ENCODE measurements at regions of chr17 and their contacts with region 1.

Region 1: GRCh38 chr17:32909787-32910369 is 18.1 kb upstream of the TMEM98 start:
- DNase-seq: peak; percentile 73
- ATAC-seq: peak; percentile 71 to 72

Region 2: GRCh38 chr17:32877164-32877764 is 32.6 kb before region 1 on chr17:
- intact Hi-C with region 1: loop called in 1 of 2 experiments (anchors 2 kb)
- DNase-seq: peak; percentile 94
- ATAC-seq: peak; percentile 98 to 99

Measured in left cardiac atrium (tissue), 4 donors.